ENCODE measurements at regions of chr11 and their contacts with region 1.

Region 1: DNA sequence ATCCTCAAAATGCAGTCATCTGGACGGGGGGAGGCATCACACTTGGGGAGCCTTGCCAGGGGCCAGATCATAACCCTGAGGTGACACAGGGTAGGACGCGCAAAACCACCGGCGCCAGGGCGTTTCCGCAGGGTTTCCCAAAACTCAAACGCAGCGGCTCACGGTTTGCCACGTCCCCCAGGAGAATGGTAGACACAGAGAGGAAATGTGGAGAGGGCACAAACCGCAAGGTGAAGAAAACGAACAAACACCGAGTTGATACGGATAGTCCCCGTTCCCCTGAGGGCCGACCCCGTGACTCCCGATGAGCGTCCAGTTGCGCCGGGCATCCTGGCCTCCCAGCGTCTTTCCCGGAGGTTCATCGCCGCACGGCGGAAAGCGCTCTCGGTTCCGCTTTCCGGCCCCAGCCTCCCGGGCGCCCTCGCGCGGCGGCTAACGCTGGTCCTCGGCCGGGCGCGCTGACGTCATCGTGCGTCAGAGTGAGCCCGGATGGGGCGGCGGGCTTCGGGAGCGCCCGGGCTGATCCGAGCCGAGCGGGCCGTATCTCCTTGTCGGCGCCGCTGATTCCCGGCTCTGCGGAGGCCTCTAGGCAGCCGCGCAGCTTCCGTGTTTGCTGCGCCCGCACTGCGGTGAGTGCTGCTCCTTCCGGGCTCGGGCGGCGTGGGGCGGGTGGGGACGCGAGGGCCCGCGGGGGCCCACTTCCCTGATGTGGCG is at the start of gene BIRC2:
- DNase-seq: peak; percentile 92 to 97 (median 95)
- H3K4me3 ChIP-seq: peak within 1 kb of the TSS; percentile 81 to 98
- H3K4me3 Mint-ChIP-seq: peak within 1 kb of the TSS; percentile 89 to 100 (median 97)
- H3K27ac ChIP-seq: peak within 1 kb of the TSS; percentile 94
- H3K27ac Mint-ChIP-seq: peak within 1 kb of the TSS; percentile 98 to 100 (median 99)
- H3K4me1 ChIP-seq: peaks cover 30% of the 10 kb centered on the region
- H3K4me1 Mint-ChIP-seq: peaks cover 24 to 56% (median 32%) of the 10 kb centered on the region in 4 donors
- H3K27me3 ChIP-seq: no peaks in the 10 kb centered on the region
- H3K27me3 Mint-ChIP-seq: peaks cover 0 to 1% of the 10 kb centered on the region in 2 donors
- total RNA-seq, gene BIRC2: 60.9 to 61.2 TPM

Region 2: DNA sequence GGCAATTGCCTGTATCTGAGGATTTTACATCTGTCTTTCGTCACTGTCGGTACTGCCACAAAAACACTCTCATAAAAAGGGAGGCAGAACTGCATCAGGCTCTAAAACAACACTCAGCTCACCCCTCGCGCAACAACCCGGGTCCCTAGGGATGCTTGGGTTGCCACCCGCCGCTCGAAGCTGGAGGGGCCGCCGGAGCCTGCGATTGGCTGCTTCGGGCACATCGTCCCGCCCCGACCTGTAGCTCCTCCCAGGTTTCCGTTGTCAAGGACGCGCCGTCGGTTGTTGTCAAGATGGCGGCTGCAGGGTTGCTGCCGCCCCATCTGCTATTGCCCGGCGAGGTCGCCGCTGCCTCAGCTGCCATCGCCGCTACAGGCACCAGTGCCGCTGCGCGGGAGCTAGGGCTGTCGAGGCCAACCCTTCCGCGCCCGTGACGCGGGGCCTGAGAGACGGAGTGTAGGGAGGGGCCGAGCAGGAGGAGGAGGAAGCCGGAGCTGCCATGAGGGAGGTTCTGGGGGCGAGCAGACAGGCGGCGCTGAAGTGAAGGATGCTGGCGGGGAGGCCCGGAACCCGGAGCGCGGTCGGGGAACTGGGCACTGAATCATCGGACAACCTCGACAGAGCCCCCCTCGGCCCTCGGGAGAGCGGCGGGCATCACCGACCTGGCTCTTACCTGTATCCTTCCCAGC is 432.0 kb before region 1 on chr11 and contains the start of gene CEP126:
- CTCF ChIA-PET with region 1: interaction called, 3 read pairs
- POLR2A ChIA-PET with region 1: no interaction called
- intact Hi-C with region 1: loop called (anchors 10 kb)
- DNase-seq: peak; percentile 91 to 94 (median 93)
- H3K4me3 ChIP-seq: peak within 1 kb of the TSS; percentile 43 to 64
- H3K4me3 Mint-ChIP-seq: peak within 1 kb of the TSS; percentile 88 to 96 (median 94)
- H3K27ac ChIP-seq: peak within 1 kb of the TSS; percentile 60
- H3K27ac Mint-ChIP-seq: peak within 1 kb of the TSS; percentile 89 to 94 (median 92)
- H3K4me1 ChIP-seq: peaks cover 18% of the 10 kb centered on the region
- H3K4me1 Mint-ChIP-seq: peaks cover 18 to 25% (median 22%) of the 10 kb centered on the region in 4 donors
- H3K27me3 ChIP-seq: no peaks in the 10 kb centered on the region
- H3K27me3 Mint-ChIP-seq: peaks cover 0 to 5% of the 10 kb centered on the region in 2 donors
- total RNA-seq, gene CEP126: 2.4 to 2.6 TPM

Region 3: GRCh38 chr11:102317099-102317767 is 29.7 kb before region 1 on chr11 and contains the start of gene BIRC3:
- CTCF ChIA-PET with region 1: interaction called, 18 read pairs
- POLR2A ChIA-PET with region 1: interaction called, 8 read pairs
- intact Hi-C with region 1: loop called (anchors 1 kb)
- DNase-seq: peak; percentile 93 to 99 (median 96)
- H3K4me3 ChIP-seq: peak within 1 kb of the TSS; percentile 94 to 96
- H3K4me3 Mint-ChIP-seq: peak within 1 kb of the TSS; percentile 90 to 100 (median 96)
- H3K27ac ChIP-seq: peak within 1 kb of the TSS; percentile 95
- H3K27ac Mint-ChIP-seq: peak within 1 kb of the TSS; percentile 90 to 99 (median 99)
- H3K4me1 ChIP-seq: peaks cover 59% of the 10 kb centered on the region
- H3K4me1 Mint-ChIP-seq: peaks cover 46 to 81% (median 58%) of the 10 kb centered on the region in 4 donors
- H3K27me3 ChIP-seq: no peaks in the 10 kb centered on the region
- H3K27me3 Mint-ChIP-seq: no peaks in the 10 kb centered on the region
- total RNA-seq, gene BIRC3: 197 to 198 TPM

Region 4: DNA sequence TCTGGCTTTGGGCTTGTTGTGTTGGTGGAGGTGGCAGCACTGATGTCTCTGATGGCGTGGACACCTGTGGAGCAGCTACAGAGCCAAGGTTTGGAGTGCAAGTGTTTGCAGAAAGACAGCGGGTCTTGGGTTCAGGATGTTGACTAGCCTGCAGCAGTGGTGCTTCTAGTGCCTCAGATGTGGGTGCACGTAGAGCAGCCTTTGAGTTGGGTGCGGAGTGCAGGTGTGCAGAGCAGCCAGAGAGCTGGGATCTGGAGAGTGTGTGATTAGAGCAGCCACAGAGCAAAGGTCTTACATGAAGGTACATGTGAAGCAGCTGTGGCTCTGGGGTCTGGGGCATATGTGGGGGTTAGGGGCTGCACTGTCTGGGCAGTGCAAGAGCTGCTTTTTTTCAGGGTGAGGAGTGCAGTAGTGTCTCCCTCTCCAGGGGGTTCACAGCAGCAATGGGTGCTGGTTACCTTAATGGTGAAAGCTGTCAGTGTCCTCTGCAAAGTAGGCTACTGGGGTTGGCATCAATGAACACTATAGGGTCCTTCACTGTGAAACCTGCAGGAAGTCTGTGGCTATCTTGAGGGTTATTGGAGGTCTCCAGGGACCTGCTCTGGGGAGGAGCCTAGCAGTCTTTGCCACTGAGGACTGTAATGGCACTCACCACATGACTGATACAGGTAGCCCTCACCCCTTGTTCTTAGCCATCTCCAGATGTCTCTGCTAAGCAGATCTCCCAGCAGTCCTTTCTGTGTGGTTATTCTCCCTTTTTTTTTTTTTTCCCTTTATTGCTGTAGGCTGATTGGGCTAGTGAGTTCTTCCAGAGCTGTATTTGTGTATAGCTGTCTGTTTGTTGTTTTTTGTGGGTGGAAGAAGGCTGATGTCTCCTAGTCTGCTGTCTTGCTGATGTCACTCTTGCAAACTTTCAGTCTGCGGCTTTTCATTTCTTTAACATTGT is 14.5 kb after region 1 on chr11:
- CTCF ChIA-PET with region 1: interaction called, 23 read pairs
- POLR2A ChIA-PET with region 1: interaction called, 8 read pairs
- intact Hi-C with region 1: loop called (anchors 1 kb)
- DNase-seq: peak; percentile 56 to 62 (median 58)
- H3K4me3 ChIP-seq: peak overlapping the region in 1 of 2 donors; percentile 33
- H3K4me3 Mint-ChIP-seq: peak overlapping the region; percentile 68 to 79 (median 74)
- H3K27ac ChIP-seq: peak overlapping the region; percentile 35
- H3K27ac Mint-ChIP-seq: peak overlapping the region; percentile 86 to 99 (median 93)
- H3K4me1 ChIP-seq: peaks cover 55% of the 10 kb centered on the region
- H3K4me1 Mint-ChIP-seq: peaks cover 41 to 76% (median 46%) of the 10 kb centered on the region in 4 donors
- H3K27me3 ChIP-seq: no peaks in the 10 kb centered on the region
- H3K27me3 Mint-ChIP-seq: no peaks in the 10 kb centered on the region

Region 5: GRCh38 chr11:102367364-102367763 is 20.5 kb after region 1 on chr11:
- CTCF ChIA-PET with region 1: interaction called, 23 read pairs
- POLR2A ChIA-PET with region 1: interaction called, 3 read pairs
- intact Hi-C with region 1: no loop called
- DNase-seq: peak in 4 of 5 donors; percentile 41 to 53 (median 50)
- H3K4me3 ChIP-seq: no peak overlapping the region
- H3K4me3 Mint-ChIP-seq: peak overlapping the region in 3 of 8 donors; percentile 7 to 27 (median 17)
- H3K27ac ChIP-seq: no peak overlapping the region
- H3K27ac Mint-ChIP-seq: peak overlapping the region; percentile 33 to 93 (median 72)
- H3K4me1 ChIP-seq: peaks cover 21% of the 10 kb centered on the region
- H3K4me1 Mint-ChIP-seq: peaks cover 27 to 37% (median 28%) of the 10 kb centered on the region in 4 donors
- H3K27me3 ChIP-seq: no peaks in the 10 kb centered on the region
- H3K27me3 Mint-ChIP-seq: no peaks in the 10 kb centered on the region

Region 6: GRCh38 chr11:102495161-102496042 is 148.5 kb after region 1 on chr11:
- CTCF ChIA-PET with region 1: interaction called, 38 read pairs
- POLR2A ChIA-PET with region 1: interaction called, 6 read pairs
- intact Hi-C with region 1: loop called (anchors 1 kb)
- DNase-seq: peak; percentile 59 to 75 (median 73)
- H3K4me3 ChIP-seq: no peak overlapping the region
- H3K4me3 Mint-ChIP-seq: peak overlapping the region in 1 of 8 donors; percentile 6
- H3K27ac ChIP-seq: no peak overlapping the region
- H3K27ac Mint-ChIP-seq: no peak overlapping the region
- H3K4me1 ChIP-seq: peaks cover 4% of the 10 kb centered on the region
- H3K4me1 Mint-ChIP-seq: peaks cover 0 to 7% (median 5%) of the 10 kb centered on the region in 4 donors
- H3K27me3 ChIP-seq: peaks cover 4% of the 10 kb centered on the region
- H3K27me3 Mint-ChIP-seq: peaks cover 5 to 7% of the 10 kb centered on the region in 2 donors

Measured in CD4-positive, alpha-beta memory T cell (primary cell).